Right cardiac atrium (tissue), 5 donors: ENCODE measurements at regions of chr2 and their contacts with region 1.

Region 1: DNA sequence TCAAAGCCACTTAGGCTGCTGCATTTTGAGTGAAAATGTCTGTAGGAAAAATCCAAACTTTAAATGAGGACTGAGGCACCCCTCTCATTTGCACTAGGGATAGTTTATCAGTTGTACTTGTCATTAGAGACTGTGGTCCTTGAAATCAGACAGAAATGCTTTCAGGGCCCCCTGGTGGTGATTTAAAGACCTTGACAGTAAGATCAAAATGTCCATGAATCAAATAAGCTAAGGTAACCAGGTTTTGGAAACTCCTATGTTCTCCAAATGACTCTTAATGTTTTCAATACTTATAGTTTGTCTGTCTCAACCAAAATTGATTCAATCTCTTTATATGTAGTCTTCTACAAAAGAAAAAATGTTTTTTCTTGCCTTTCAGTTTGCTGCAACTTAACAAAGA is 28.8 kb upstream of the DDX18 start:
- DNase-seq: no peak
- ATAC-seq: no peak
- H3K4me3 ChIP-seq: no peak overlapping the region
- H3K27ac ChIP-seq: no peak overlapping the region
- H3K4me1 ChIP-seq: no peaks in the 10 kb centered on the region
- H3K27me3 ChIP-seq: no peaks in the 10 kb centered on the region

Region 2: DNA sequence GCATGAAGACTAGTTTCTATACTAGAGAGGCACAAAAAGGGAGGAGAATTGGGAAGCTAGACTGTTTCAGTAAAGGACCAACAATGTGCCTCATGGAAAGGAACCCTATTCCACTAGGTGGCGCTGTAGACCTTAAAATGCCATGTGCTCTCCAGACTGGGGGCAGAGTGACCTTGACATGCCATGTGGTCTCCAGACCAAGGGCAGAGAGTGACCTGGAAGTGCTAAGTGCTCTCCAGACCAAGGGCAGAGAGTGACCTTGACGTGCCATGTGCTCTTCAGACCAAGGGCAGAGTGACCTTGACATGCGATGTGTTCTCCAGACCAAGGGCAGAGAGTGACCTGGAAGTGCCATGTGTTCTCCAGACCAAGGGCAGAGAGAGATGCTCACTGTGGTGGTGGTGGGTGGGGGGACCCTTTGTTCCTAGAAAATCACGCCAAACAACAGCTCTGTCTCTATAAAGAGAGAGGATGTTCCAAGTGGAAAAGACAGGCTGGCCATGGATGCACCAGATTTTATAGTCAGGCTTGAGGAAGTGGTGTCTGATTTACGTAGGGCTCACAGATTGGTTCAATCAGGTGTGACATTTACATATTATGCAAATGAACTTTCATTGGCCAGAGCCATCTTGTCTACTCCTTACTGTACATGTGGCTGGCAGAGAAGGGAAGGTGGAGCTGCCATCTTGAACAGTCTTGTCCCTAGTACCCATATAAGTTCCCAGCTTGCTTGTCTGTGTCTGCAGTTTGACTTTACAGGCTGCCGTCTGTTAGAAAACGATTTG is 315.2 kb before region 1 on chr2:
- intact Hi-C with region 1: loop called in 1 of 4 experiments (anchors 5 kb)
- DNase-seq: no peak
- ATAC-seq: no peak
- H3K4me3 ChIP-seq: no peak overlapping the region
- H3K27ac ChIP-seq: no peak overlapping the region
- H3K4me1 ChIP-seq: no peaks in the 10 kb centered on the region
- H3K27me3 ChIP-seq: no peaks in the 10 kb centered on the region

Region 3: DNA sequence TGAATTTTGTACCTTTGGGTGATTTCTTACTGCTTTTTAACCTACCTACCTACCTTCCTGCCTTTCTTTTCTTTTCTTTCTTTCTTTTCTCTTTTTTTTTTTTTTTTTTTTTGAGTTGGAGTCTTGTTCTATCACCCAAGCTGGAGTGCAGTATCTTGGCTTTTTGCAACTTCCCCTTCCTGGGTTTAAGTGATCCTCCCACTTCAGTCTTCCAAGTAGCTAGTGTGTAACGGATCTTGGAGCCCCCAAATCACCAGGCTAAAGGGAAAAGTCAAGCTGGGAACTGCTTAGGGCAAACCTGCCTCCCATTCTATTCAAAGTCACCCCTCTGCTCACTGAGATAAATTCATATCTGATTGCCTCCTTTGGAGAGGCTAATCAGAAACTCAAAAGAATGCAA is 90.0 kb after region 1 on chr2:
- intact Hi-C with region 1: no loop called
- DNase-seq: no peak
- ATAC-seq: no peak
- H3K4me3 ChIP-seq: no peak overlapping the region
- H3K27ac ChIP-seq: no peak overlapping the region
- H3K4me1 ChIP-seq: no peaks in the 10 kb centered on the region
- H3K27me3 ChIP-seq: no peaks in the 10 kb centered on the region